Mucosa of descending colon (tissue), 3 donors: ENCODE measurements at regions of chr9 and their contacts with region 1.

Region 1: GRCh38 chr9:17926251-17926650 is 347.4 kb downstream of the SH3GL2 start:
- DNase-seq: no peak
- ATAC-seq: no peak
- H3K4me3 ChIP-seq: no peak overlapping the region
- H3K4me1 ChIP-seq: no peaks in the 10 kb centered on the region
- CTCF ChIP-seq: no peak

Region 2: GRCh38 chr9:17436854-17437253 is 489.4 kb before region 1 on chr9:
- intact Hi-C with region 1: no loop called
- DNase-seq: no peak
- ATAC-seq: no peak
- H3K4me3 ChIP-seq: no peak overlapping the region
- H3K4me1 ChIP-seq: no peaks in the 10 kb centered on the region
- CTCF ChIP-seq: no peak

Region 3: DNA sequence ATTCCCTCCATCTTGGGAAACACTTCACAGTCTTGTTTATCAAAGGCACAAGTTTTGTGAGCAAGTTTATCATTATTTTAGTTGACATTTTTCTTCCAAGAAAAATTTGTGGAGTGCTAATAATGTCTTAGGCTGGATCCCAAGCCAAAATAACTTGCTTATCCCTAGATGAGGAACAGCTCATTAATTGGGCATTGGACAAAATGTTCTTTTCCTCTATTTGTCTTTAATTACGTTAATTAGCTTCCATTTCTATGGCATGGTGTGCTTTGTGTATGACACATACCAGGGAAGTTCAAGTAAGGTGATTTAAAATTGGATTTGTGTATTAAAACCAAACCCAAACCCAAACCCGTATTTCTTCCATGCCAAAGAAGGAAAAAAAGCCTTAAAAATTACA is 32.1 kb after region 1 on chr9:
- intact Hi-C with region 1: loop called in 1 of 2 experiments (anchors 2 kb)
- DNase-seq: no peak
- ATAC-seq: no peak
- H3K4me3 ChIP-seq: no peak overlapping the region
- H3K4me1 ChIP-seq: no peaks in the 10 kb centered on the region
- CTCF ChIP-seq: no peak